ENCODE measurements at regions of chr3 and their contacts with region 1.

Region 1: GRCh38 chr3:66500576-66501482 is at the start of gene LRIG1:
- DNase-seq: peak; percentile 100
- ATAC-seq: peak; percentile 77 to 91 (median 82)
- H3K4me3 ChIP-seq: peak within 1 kb of the TSS; percentile 86 to 100 (median 94)
- H3K27ac ChIP-seq: peak within 1 kb of the TSS; percentile 87 to 99 (median 94)
- H3K4me1 ChIP-seq: peaks cover 3 to 37% (median 23%) of the 10 kb centered on the region in 3 donors
- H3K27me3 ChIP-seq: no peaks in the 10 kb centered on the region
- CTCF ChIP-seq: peak in 3 of 4 donors; percentile 19 to 46 (median 38)
- total RNA-seq, gene LRIG1: 57.8 to 104 (median 80.5) TPM

Region 2: GRCh38 chr3:66239513-66240123 is 261.2 kb before region 1 on chr3:
- intact Hi-C with region 1: no loop called
- DNase-seq: no peak
- ATAC-seq: no peak
- H3K4me3 ChIP-seq: no peak overlapping the region
- H3K27ac ChIP-seq: no peak overlapping the region
- H3K4me1 ChIP-seq: no peaks in the 10 kb centered on the region
- H3K27me3 ChIP-seq: no peaks in the 10 kb centered on the region
- CTCF ChIP-seq: no peak

Region 3: DNA sequence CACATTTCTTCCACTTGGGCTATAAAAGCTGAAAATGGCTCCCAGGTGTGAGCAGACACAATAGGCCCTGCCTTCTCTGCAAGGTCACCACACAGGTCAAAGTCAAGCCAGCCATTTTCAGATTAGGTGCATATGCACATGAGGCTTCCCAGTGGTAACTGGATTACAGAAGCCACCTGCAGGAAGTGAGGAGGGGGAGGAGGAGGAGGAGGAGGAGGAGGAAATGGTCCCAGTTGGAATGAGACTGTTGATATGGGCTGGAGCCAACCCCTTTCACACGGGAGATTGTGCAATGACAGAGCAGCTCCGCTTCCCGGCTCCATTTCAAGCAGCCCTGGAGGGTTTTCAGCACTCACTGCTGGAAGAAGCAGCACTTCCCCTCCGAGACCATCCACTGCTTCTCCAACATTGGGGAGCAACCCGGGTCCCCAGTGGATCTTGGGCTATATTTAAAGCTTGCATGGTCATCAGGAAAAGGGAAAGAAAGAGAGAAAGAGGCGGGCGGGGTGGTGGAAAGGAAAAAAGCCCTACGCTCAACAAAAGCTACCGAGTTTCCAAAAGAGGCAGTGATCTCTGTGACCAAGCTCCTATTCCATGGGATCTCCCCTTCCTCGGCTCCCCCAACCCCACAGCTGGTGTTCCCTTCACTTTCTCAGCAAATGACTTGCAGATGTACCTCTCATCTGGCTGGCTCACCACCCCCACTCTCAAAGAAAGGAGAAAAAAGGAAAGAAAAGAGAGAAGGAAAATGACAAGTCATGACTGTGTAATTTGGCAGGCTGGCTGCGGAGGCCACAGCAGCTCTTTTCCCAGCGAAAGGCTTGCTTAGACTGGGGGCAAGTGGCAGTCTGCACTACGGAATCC is 58.3 kb before region 1 on chr3:
- intact Hi-C with region 1: loop called in 2 of 3 experiments (anchors 5 to 10 kb)
- DNase-seq: peak in 4 of 6 donors; percentile 80 to 90 (median 86)
- ATAC-seq: peak; percentile 84 to 91 (median 88)
- H3K4me3 ChIP-seq: peak overlapping the region in 1 of 4 donors; percentile 20
- H3K27ac ChIP-seq: peak overlapping the region; percentile 47 to 91 (median 58)
- H3K4me1 ChIP-seq: peaks cover 34 to 52% (median 52%) of the 10 kb centered on the region in 3 donors
- H3K27me3 ChIP-seq: no peaks in the 10 kb centered on the region
- CTCF ChIP-seq: no peak

Region 4: GRCh38 chr3:66449411-66449974 is 51.3 kb before region 1 on chr3:
- intact Hi-C with region 1: loop called in 2 of 3 experiments (anchors 5 to 10 kb)
- DNase-seq: no peak
- ATAC-seq: peak in 2 of 4 donors; percentile 2 to 6
- H3K4me3 ChIP-seq: no peak overlapping the region
- H3K27ac ChIP-seq: peak overlapping the region in 2 of 4 donors; percentile 59 to 63
- H3K4me1 ChIP-seq: peaks cover 49 to 62% (median 61%) of the 10 kb centered on the region in 3 donors
- H3K27me3 ChIP-seq: no peaks in the 10 kb centered on the region
- CTCF ChIP-seq: no peak

Region 5: DNA sequence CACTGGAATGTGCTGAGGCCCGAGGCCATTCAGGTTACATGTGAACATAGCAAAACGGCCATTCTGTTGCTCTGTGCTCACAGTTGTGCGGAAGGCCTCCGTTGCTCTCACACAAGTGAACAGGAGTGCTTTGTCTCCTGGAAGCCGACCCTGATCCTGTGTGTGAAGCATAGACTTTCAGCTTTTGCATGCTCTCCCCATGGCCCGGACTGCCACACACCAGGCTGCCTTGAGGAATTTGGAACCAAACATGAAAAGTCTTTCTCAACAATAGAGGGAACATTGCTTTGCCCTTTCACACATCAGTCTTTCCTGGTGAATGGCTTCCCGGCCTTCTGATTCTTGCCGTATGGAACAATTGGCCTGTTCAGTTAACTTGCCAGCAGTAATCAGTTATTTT is 154.8 kb after region 1 on chr3:
- intact Hi-C with region 1: no loop called
- DNase-seq: no peak
- ATAC-seq: no peak
- H3K4me3 ChIP-seq: no peak overlapping the region
- H3K27ac ChIP-seq: no peak overlapping the region
- H3K4me1 ChIP-seq: no peaks in the 10 kb centered on the region
- H3K27me3 ChIP-seq: no peaks in the 10 kb centered on the region
- CTCF ChIP-seq: no peak

Region 6: GRCh38 chr3:66898155-66898554 is 397.3 kb after region 1 on chr3:
- intact Hi-C with region 1: no loop called
- DNase-seq: no peak
- ATAC-seq: no peak
- H3K4me3 ChIP-seq: no peak overlapping the region
- H3K27ac ChIP-seq: no peak overlapping the region
- H3K4me1 ChIP-seq: no peaks in the 10 kb centered on the region
- H3K27me3 ChIP-seq: no peaks in the 10 kb centered on the region
- CTCF ChIP-seq: no peak